ENCODE measurements at regions of chr6 and their contacts with region 1.

Region 1: GRCh38 chr6:41602864-41603608 is 35.2 kb upstream of the MDFI start:
- DNase-seq: no peak
- H3K4me3 ChIP-seq: no peak overlapping the region
- H3K27ac ChIP-seq: no peak overlapping the region
- H3K4me1 ChIP-seq: peaks cover 4% of the 10 kb centered on the region
- H3K27me3 ChIP-seq: no peaks in the 10 kb centered on the region
- CTCF ChIP-seq: peak; percentile 61 to 88 (median 70)
- POLR2A ChIP-seq: no peak

Region 2: DNA sequence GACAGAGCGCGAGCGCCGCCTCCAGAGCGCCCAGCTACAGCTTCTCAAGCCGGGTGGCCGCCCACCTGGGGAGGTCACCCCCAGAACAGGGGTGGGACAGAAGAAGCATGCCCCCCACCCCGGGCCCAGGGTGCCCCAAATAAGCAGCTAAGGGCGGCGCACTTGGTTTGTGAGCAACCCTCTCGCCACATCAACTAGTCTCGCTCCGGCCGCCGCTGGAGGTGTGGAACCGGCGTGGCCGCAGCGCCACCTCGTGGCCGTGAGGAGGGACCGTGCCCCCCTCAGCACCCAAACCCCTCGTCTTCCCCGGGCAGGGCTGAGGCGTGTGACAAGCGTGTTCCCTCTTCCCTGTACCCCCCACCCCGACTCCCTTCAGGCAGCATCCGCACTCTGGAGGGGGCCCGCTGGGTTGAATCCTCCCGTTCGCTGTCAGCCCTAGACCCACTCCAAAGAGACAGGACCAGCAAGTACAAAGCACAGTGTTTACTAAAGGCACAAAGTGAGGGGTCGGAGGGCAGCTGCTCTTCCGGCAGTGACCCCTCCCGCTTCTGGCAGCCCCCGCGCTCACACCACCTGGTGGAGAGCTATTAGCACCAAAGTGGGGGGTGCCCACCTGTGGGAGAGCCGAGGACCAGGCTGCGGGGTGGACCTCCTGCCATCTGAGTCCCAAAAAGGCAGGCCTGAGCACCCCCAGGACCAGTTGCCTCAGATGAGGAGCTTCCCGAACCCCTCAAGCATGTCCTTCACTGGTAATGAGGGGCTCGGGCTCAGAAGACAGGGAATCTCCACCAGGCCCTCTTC is 80.7 kb after region 1 on chr6:
- intact Hi-C with region 1: loop called (anchors 1 kb)
- DNase-seq: no peak
- H3K4me3 ChIP-seq: peak overlapping the region; percentile 47 to 58
- H3K27ac ChIP-seq: peak overlapping the region; percentile 72
- H3K4me1 ChIP-seq: peaks cover 20% of the 10 kb centered on the region
- H3K27me3 ChIP-seq: no peaks in the 10 kb centered on the region
- CTCF ChIP-seq: peak; percentile 87 to 97 (median 93)
- POLR2A ChIP-seq: no peak

Measured in vagina (tissue), 2 donors.